Dendritic cell treated with granulocyte-macrophage colony-stimulating factor and Interleukin-4, amounts not matched to agents 40 ng/mL and 50 ng/mL, for 4 days (primary cell): ENCODE measurements at regions of chr1 and their contacts with region 1.

Region 1: GRCh38 chr1:208652296-208653160 is 408.3 kb upstream of the PLXNA2 start:
- H3K4me3 Mint-ChIP-seq: no peak overlapping the region
- H3K27ac Mint-ChIP-seq: no peak overlapping the region
- H3K4me1 Mint-ChIP-seq: no peaks in the 10 kb centered on the region
- H3K27me3 Mint-ChIP-seq: no peaks in the 10 kb centered on the region

Region 2: GRCh38 chr1:208374391-208374941 is 278.1 kb before region 1 on chr1:
- intact Hi-C with region 1: no loop called
- H3K4me3 Mint-ChIP-seq: no peak overlapping the region
- H3K27ac Mint-ChIP-seq: no peak overlapping the region
- H3K4me1 Mint-ChIP-seq: no peaks in the 10 kb centered on the region
- H3K27me3 Mint-ChIP-seq: no peaks in the 10 kb centered on the region

Region 3: DNA sequence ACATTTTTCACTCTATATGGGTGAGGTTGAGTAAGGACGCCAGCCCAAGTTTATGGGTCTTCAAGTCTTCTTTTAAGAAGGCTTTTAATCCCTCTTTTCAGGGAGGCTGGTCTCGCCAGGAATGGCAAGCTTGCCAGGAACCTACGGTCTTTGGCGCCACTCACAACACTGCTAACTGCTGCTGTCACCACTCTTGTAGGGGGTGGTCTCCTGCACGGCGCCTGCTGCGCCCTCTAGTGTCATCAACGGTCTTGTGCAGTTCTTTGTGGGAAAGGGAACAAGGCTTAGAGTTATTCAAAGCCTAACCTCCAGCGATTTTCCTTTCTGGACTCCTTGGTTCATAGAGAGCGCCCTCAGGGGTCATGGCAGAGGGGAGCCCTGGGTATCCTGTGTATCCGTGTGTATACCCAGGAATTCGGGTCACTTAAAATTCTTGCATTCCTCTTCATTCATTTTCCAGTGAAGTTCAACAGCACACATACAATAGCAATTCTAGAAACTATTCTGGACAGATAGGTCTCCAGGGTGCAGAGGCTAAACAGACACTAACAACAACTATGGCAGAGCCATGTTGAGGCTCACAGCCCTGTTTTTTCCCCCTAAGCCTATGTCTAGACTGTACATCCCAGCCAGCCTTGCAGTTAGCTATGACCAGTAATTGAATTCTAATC is 538.2 kb after region 1 on chr1:
- intact Hi-C with region 1: loop called (anchors 5 kb)
- H3K4me3 Mint-ChIP-seq: no peak overlapping the region
- H3K27ac Mint-ChIP-seq: no peak overlapping the region
- H3K4me1 Mint-ChIP-seq: no peaks in the 10 kb centered on the region
- H3K27me3 Mint-ChIP-seq: no peaks in the 10 kb centered on the region

Region 4: DNA sequence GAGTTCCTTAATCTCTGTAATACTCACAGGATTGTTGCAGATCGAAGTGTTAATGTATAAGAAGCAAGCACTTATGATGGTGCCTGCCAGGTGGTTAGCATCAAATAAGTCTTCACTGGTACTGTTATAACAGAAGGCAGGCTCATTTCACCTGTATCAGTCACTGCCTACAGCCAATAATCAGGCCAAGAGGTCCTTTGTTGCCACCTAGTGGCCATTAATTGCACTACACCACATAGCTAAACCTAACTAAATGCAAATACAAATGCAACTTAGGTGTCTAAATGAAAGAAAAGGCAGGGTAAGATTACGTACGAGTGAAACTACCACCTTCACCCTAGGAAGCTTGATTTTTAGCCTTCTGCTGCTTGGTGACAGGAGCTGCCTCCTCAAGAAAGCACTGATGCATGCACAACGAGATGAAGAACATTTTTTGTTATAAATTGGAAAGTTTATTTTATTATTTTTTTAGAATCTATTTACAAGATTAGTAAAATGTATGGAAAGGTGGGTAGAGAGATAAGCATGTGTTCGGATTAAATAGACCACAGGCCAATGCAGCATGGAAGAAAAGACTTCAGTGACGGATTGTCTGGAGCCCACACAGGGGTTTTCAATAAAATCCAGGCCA is 596.2 kb after region 1 on chr1:
- intact Hi-C with region 1: loop called (anchors 2 kb)
- H3K4me3 Mint-ChIP-seq: no peak overlapping the region
- H3K27ac Mint-ChIP-seq: no peak overlapping the region
- H3K4me1 Mint-ChIP-seq: no peaks in the 10 kb centered on the region
- H3K27me3 Mint-ChIP-seq: no peaks in the 10 kb centered on the region

Region 5: GRCh38 chr1:209565759-209566678 is 913.5 kb after region 1 on chr1:
- intact Hi-C with region 1: loop called (anchors 2 kb)
- H3K4me3 Mint-ChIP-seq: no peak overlapping the region
- H3K27ac Mint-ChIP-seq: no peak overlapping the region
- H3K4me1 Mint-ChIP-seq: peaks cover 14% of the 10 kb centered on the region
- H3K27me3 Mint-ChIP-seq: peaks cover 46% of the 10 kb centered on the region